ENCODE measurements at regions of chr4 and their contacts with region 1.

Region 1: GRCh38 chr4:125663896-125664767 is 349.4 kb downstream of the FAT4 start:
- DNase-seq: no peak
- H3K4me3 ChIP-seq: no peak overlapping the region
- H3K27me3 ChIP-seq: no peaks in the 10 kb centered on the region
- CTCF ChIP-seq: no peak

Region 2: GRCh38 chr4:124641715-124642381 is 1022.3 kb before region 1 on chr4:
- CTCF ChIA-PET with region 1: no interaction called
- POLR2A ChIA-PET with region 1: interaction called, 11 read pairs
- DNase-seq: peak; percentile 29
- H3K4me3 ChIP-seq: no peak overlapping the region
- H3K27me3 ChIP-seq: no peaks in the 10 kb centered on the region
- CTCF ChIP-seq: no peak

Region 3: DNA sequence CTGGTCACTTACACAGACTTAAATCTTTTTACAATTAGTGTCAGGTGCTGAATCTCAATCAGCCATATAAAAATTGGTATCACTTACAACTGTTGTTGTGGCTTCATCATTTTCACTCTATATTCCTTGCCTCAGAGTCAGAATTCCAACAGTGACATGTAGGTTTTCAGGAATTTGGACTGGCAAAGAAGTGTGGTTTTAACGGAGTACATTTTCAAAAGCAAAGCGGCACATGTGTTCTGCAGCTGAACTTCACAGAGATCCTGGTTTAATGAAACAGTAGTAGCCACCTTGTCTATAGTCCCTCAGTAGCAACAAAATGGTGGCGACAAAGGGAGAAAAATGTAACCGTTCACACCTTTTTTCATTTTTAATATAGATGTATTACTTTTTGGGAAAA is 137.2 kb after region 1 on chr4:
- CTCF ChIA-PET with region 1: no interaction called
- POLR2A ChIA-PET with region 1: no interaction called
- DNase-seq: peak; percentile 32
- H3K4me3 ChIP-seq: no peak overlapping the region
- H3K27me3 ChIP-seq: no peaks in the 10 kb centered on the region
- CTCF ChIP-seq: no peak

Measured in BJ (cell line).